Heart left ventricle (tissue), 16 donors: ENCODE measurements at regions of chr18 and their contacts with region 1.

Region 1: DNA sequence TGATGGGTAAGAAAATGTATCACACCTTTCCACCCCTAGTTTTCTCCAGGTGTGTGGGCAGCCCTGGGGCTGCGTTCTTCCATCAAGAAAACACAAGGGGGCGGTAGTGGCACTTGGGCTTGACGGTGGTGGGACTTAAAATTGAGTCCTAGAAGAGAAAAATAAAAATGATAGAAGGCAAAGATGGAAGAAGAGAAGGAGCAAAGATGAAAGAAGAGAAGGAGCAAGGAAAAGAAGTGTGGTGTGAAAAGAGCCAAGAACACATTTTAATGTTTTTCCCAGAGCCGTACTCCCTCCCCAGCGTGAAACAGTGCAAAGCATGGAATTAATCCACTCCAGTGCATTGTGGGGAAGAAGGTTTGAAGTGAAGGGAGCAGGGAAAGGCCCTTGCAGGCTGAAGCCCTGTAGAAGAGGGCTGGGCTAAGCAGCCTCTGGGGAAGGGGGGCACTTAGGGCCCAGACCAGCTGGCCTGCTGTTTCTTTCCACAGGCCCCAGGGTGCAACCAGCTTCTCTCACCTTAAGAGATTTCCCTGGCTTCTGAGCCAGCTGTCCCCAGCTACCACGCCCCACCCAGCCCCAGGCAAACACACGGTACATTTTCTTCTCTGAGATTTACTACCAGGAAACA is 256.8 kb downstream of the RNF152 start:
- DNase-seq: peak; percentile 35 to 64 (median 50)
- ATAC-seq: peak; percentile 51 to 87 (median 80)
- H3K4me3 ChIP-seq: no peak overlapping the region
- H3K27ac ChIP-seq: peak overlapping the region in 10 of 12 donors; percentile 8 to 73 (median 36)
- H3K4me1 ChIP-seq: peaks cover 0 to 14% (median 6%) of the 10 kb centered on the region in 12 donors
- H3K27me3 ChIP-seq: no peaks in the 10 kb centered on the region
- CTCF ChIP-seq: peak; percentile 74 to 93 (median 87)
- POLR2A ChIP-seq: no peak

Region 2: GRCh38 chr18:61581578-61582201 is 54.3 kb before region 1 on chr18:
- intact Hi-C with region 1: loop called in 4 of 10 experiments (anchors 5 kb)
- DNase-seq: peak; percentile 73 to 88 (median 75)
- ATAC-seq: peak; percentile 83 to 93 (median 90)
- H3K4me3 ChIP-seq: peak overlapping the region in 11 of 12 donors; percentile 28 to 58 (median 49)
- H3K27ac ChIP-seq: peak overlapping the region in 11 of 12 donors; percentile 55 to 84 (median 71)
- H3K4me1 ChIP-seq: peaks cover 0 to 40% (median 16%) of the 10 kb centered on the region in 12 donors
- H3K27me3 ChIP-seq: no peaks in the 10 kb centered on the region
- CTCF ChIP-seq: peak; percentile 99 to 100 (median 99)
- POLR2A ChIP-seq: no peak

Region 3: GRCh38 chr18:61731693-61732376 is 95.8 kb after region 1 on chr18:
- intact Hi-C with region 1: loop called in 2 of 10 experiments (anchors 5 to 10 kb)
- DNase-seq: peak in 4 of 5 donors; percentile 33 to 41 (median 38)
- ATAC-seq: peak; percentile 68 to 71 (median 68)
- H3K4me3 ChIP-seq: no peak overlapping the region
- H3K27ac ChIP-seq: peak overlapping the region; percentile 51 to 93 (median 79)
- H3K4me1 ChIP-seq: peaks cover 0 to 37% (median 13%) of the 10 kb centered on the region in 12 donors
- H3K27me3 ChIP-seq: peaks cover 0 to 2% (median 0%) of the 10 kb centered on the region in 9 donors
- CTCF ChIP-seq: no peak
- POLR2A ChIP-seq: no peak

Region 4: GRCh38 chr18:61743775-61744531 is 107.9 kb after region 1 on chr18:
- intact Hi-C with region 1: loop called in 4 of 10 experiments (anchors 2 to 10 kb)
- DNase-seq: peak in 4 of 5 donors; percentile 51 to 70 (median 68)
- ATAC-seq: peak; percentile 63 to 78 (median 70)
- H3K4me3 ChIP-seq: no peak overlapping the region
- H3K27ac ChIP-seq: peak overlapping the region; percentile 66 to 95 (median 85)
- H3K4me1 ChIP-seq: peaks cover 0 to 74% (median 32%) of the 10 kb centered on the region in 12 donors
- H3K27me3 ChIP-seq: no peaks in the 10 kb centered on the region
- CTCF ChIP-seq: no peak
- POLR2A ChIP-seq: no peak

Region 5: GRCh38 chr18:61755555-61755954 is 119.5 kb after region 1 on chr18:
- intact Hi-C with region 1: no loop called
- DNase-seq: no peak
- ATAC-seq: no peak
- H3K4me3 ChIP-seq: no peak overlapping the region
- H3K27ac ChIP-seq: no peak overlapping the region
- H3K4me1 ChIP-seq: peaks cover 0 to 24% (median 7%) of the 10 kb centered on the region in 12 donors
- H3K27me3 ChIP-seq: no peaks in the 10 kb centered on the region
- CTCF ChIP-seq: no peak
- POLR2A ChIP-seq: no peak

Region 6: GRCh38 chr18:62030091-62030985 is 394.3 kb after region 1 on chr18:
- intact Hi-C with region 1: loop called in 1 of 10 experiments (anchors 10 kb)
- DNase-seq: no peak
- ATAC-seq: no peak
- H3K4me3 ChIP-seq: no peak overlapping the region
- H3K27ac ChIP-seq: no peak overlapping the region
- H3K4me1 ChIP-seq: peaks cover 0 to 12% (median 0%) of the 10 kb centered on the region in 12 donors
- H3K27me3 ChIP-seq: no peaks in the 10 kb centered on the region
- CTCF ChIP-seq: no peak
- POLR2A ChIP-seq: no peak